Mammary epithelial cell (primary cell): ENCODE measurements at regions of chr10 and their contacts with region 1.

Region 1: DNA sequence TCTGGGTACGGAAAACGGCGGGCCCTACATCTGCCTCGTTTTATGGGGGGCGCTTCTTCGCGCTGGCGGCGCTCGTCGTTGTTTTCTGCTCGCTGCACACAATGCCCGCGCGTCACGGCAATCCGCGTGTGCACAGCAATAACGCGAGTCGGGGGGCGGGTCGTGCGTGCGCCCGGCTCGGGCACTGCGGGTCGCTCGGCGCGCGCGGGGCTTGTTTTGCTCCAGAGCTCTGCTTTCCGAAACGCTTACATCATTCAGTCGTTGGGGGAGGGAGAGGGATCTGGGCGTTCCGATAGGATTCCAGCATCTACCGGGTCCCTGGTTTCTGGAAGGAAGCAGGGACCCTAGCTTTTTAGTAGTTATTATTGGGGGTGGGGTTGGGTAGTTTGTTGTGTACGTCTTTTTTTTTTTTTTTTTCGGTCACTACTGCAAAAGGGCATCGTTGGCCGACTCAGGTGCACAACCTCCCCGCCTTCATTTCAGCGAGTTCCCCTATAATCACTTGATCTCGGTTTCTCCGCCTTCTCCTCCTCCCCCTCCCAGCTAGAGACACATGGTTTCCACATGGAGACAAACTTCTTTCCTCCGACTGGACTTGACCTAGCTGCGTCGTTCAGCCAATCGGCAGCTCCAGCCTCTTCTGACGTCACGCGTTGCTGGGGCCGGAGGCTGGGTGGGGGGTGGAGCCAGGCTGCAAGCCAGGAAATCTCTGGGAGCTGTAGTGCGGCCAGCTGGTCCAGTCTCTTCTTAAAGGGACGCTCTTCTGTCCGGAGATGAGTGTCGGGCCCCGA is 3.5 kb downstream of the MXI1 start:
- DNase-seq: peak; percentile 98
- H3K4me3 ChIP-seq: peak overlapping the region; percentile 75 to 82 (median 76)
- H3K27ac ChIP-seq: peak overlapping the region; percentile 76
- H3K4me1 ChIP-seq: peaks cover 11% of the 10 kb centered on the region
- H3K27me3 ChIP-seq: no peaks in the 10 kb centered on the region
- CTCF ChIP-seq: no peak

Region 2: GRCh38 chr10:110175416-110175815 is 35.5 kb before region 1 on chr10:
- CTCF ChIA-PET with region 1: no interaction called
- dilution Hi-C with region 1: no loop called
- in situ Hi-C with region 1: no loop called
- intact Hi-C with region 1: loop called (anchors 2 kb)
- DNase-seq: peak; percentile 79
- H3K4me3 ChIP-seq: no peak overlapping the region
- H3K27ac ChIP-seq: peak overlapping the region; percentile 30
- H3K4me1 ChIP-seq: peaks cover 21% of the 10 kb centered on the region
- H3K27me3 ChIP-seq: no peaks in the 10 kb centered on the region
- CTCF ChIP-seq: no peak

Region 3: GRCh38 chr10:110225756-110226542 is 15.1 kb after region 1 on chr10:
- CTCF ChIA-PET with region 1: interaction called, 43 read pairs
- dilution Hi-C with region 1: no loop called
- in situ Hi-C with region 1: no loop called
- intact Hi-C with region 1: loop called (anchors 1 kb)
- DNase-seq: peak; percentile 92
- H3K4me3 ChIP-seq: peak overlapping the region; percentile 73 to 95 (median 92)
- H3K27ac ChIP-seq: peak overlapping the region; percentile 43
- H3K4me1 ChIP-seq: peaks cover 33% of the 10 kb centered on the region
- H3K27me3 ChIP-seq: no peaks in the 10 kb centered on the region
- CTCF ChIP-seq: peak; percentile 54 to 71

Region 4: GRCh38 chr10:110279407-110279986 is 68.6 kb after region 1 on chr10:
- CTCF ChIA-PET with region 1: interaction called, 4 read pairs
- dilution Hi-C with region 1: no loop called
- in situ Hi-C with region 1: no loop called
- intact Hi-C with region 1: loop called (anchors 1 kb)
- DNase-seq: peak; percentile 43
- H3K4me3 ChIP-seq: no peak overlapping the region
- H3K27ac ChIP-seq: no peak overlapping the region
- H3K4me1 ChIP-seq: peaks cover 7% of the 10 kb centered on the region
- H3K27me3 ChIP-seq: no peaks in the 10 kb centered on the region
- CTCF ChIP-seq: peak; percentile 75

Region 5: DNA sequence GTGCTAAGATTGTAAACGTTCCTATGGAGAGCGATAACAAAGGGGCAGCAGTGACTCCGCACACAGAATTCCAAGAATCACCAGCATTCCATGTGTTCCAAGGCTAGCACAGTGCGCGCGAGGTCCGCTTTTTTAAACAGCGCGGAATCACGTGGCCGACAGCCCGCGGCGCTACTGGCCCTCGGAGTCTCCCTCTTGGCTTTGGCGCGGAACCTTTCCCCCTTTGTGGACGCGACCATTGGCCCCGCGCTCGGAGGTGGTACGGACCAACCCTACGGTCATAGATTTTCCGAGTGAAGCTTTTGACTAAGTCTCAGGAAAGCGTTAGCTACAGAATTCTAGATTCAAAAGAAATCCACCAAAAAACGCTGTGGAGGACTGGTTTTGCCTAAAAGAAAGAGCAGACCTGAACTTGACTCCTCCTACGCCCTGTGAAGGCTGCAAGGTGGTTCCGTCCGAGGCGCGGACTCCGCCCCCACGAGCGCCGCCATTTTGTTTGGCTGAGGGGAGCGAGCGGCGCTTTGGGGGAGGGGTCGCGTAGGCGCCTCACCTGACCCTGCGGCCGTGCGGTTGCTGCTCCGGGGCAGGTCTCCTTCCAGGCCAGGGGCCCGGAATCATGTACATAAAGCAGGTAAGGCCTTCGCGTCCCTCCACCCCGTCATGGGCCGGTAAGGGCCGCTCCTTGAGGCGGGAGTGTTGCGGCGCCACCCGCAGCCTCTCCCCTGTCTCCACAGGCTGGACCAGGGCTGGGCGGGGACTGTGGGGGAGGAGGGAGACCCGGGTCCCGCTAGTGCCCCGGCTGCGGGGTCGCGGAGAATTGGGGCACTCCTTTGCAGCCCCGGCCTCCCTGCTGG is 356.6 kb after region 1 on chr10 and contains the start of gene SMC3:
- CTCF ChIA-PET with region 1: no interaction called
- dilution Hi-C with region 1: no loop called
- in situ Hi-C with region 1: no loop called
- intact Hi-C with region 1: no loop called
- DNase-seq: peak; percentile 91
- H3K4me3 ChIP-seq: peak within 1 kb of the TSS; percentile 63 to 88 (median 88)
- H3K27ac ChIP-seq: peak within 1 kb of the TSS; percentile 98
- H3K4me1 ChIP-seq: no peaks in the 10 kb centered on the region
- H3K27me3 ChIP-seq: no peaks in the 10 kb centered on the region
- CTCF ChIP-seq: no peak
- total RNA-seq, gene SMC3: 10.2 to 34.3 TPM

Region 6: GRCh38 chr10:111473361-111473760 is 1262.5 kb after region 1 on chr10:
- CTCF ChIA-PET with region 1: no interaction called
- dilution Hi-C with region 1: no loop called
- in situ Hi-C with region 1: no loop called
- intact Hi-C with region 1: loop called (anchors 5 kb)
- DNase-seq: peak; percentile 91
- H3K4me3 ChIP-seq: no peak overlapping the region
- H3K27ac ChIP-seq: no peak overlapping the region
- H3K4me1 ChIP-seq: peaks cover 28% of the 10 kb centered on the region
- H3K27me3 ChIP-seq: no peaks in the 10 kb centered on the region
- CTCF ChIP-seq: no peak